Heart left ventricle (tissue), 16 donors: ENCODE measurements at regions of chr5 and their contacts with region 1.

Region 1: GRCh38 chr5:158695595-158696330 is 404.0 kb downstream of the EBF1 start:
- DNase-seq: peak; percentile 67 to 83 (median 72)
- ATAC-seq: peak; percentile 57 to 91 (median 82)
- H3K4me3 ChIP-seq: no peak overlapping the region
- H3K27ac ChIP-seq: peak overlapping the region in 8 of 12 donors; percentile 14 to 58 (median 40)
- H3K4me1 ChIP-seq: peaks cover 0 to 66% (median 6%) of the 10 kb centered on the region in 12 donors
- H3K27me3 ChIP-seq: peaks cover 0 to 9% (median 0%) of the 10 kb centered on the region in 9 donors
- CTCF ChIP-seq: peak; percentile 89 to 99 (median 97)
- POLR2A ChIP-seq: no peak

Region 2: DNA sequence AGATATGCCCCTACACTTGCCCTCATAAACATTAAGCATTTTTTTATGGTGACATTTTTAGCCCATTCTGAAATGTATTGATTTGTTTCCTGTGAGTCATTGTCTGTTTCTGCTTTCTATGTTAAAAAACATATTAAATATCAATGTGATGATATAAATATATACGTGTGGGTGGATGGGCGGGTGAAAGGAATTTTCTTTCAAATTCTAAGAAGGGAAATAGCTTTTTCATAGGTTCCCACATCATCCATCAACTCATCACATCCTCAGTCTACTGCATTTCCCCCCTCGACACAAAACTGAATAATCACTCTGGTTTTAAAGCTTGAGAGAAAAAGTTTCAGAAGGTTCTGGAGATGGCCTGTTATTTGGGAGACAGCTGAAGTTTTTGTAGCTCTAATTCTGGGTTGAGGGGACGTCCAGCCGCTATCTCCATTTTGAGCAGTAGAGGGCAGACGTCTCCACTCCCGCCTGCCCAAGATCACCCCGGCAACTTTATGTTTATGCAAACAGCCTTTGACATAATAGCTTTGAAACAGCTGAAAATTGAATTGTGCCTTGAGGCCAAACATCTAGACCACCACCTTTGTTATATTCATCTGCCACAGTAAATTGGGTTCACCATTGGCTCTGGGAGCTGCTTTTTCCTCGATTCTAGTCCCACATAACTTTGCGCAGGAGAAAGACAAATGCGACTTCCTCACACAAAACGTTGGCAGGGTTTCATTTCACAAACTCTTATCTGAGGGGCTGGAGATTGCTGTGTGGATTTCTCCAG is 620.6 kb before region 1 on chr5:
- intact Hi-C with region 1: loop called in 2 of 10 experiments (anchors 5 to 10 kb)
- DNase-seq: peak; percentile 30 to 61 (median 57)
- ATAC-seq: peak in 3 of 4 donors; percentile 82 to 86 (median 83)
- H3K4me3 ChIP-seq: peak overlapping the region in 11 of 12 donors; percentile 2 to 44 (median 27)
- H3K27ac ChIP-seq: peak overlapping the region in 7 of 12 donors; percentile 28 to 60 (median 48)
- H3K4me1 ChIP-seq: peaks cover 0 to 10% (median 5%) of the 10 kb centered on the region in 12 donors
- H3K27me3 ChIP-seq: no peaks in the 10 kb centered on the region
- CTCF ChIP-seq: peak; percentile 73 to 92 (median 84)
- POLR2A ChIP-seq: no peak

Region 3: DNA sequence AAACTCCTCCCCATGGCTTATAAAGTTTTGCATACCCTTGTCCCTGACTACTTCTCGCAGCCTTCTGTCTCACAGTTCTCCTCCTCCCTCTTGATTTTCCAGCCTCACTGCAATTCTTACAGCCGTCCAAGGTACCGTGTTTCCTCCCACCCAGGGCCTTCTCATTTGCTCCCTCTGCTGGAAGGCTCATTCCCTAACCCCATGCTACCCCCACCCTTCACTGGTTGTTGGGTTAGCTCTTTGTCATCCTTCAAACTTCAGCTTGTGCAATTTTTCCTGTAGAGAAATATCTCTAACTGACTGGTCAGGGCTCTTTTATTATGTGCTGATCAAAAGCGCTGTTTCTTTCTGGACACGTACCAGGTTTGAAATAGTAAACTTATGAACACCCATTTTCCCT is 74.7 kb after region 1 on chr5:
- intact Hi-C with region 1: loop called in 1 of 10 experiments (anchors 5 kb)
- DNase-seq: no peak
- ATAC-seq: peak in 1 of 4 donors; percentile 18
- H3K4me3 ChIP-seq: no peak overlapping the region
- H3K27ac ChIP-seq: peak overlapping the region in 5 of 12 donors; percentile 4 to 49 (median 17)
- H3K4me1 ChIP-seq: peaks cover 0 to 57% (median 14%) of the 10 kb centered on the region in 12 donors
- H3K27me3 ChIP-seq: no peaks in the 10 kb centered on the region
- CTCF ChIP-seq: peak in 2 of 12 donors; percentile 9 to 13
- POLR2A ChIP-seq: no peak

Region 4: DNA sequence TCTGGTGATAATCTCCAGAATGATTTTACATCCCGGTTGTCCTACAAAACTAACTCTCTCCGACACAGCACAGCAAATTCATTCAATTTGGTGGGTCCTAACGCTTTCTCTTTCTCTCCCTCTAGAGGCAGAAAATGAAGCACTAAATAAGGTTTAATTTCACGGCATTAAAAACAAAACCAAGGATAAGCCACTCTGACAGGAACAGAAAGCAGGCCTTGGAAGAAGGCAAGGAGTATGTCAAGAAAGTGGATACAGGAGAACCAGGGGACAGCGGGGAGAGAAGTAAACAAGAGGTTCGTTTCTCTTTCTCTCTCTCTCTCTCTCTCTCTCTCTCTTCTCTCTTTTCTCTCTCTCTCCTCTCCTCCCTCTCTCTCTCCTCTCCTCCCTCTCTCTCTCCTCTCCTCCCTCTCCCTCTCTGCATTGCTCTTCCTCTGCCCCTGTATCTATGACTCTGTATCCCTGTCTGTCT is 354.1 kb after region 1 on chr5:
- intact Hi-C with region 1: loop called in 1 of 10 experiments (anchors 5 kb)
- DNase-seq: no peak
- ATAC-seq: peak; percentile 43 to 70 (median 63)
- H3K4me3 ChIP-seq: peak overlapping the region in 7 of 12 donors; percentile 1 to 55 (median 44)
- H3K27ac ChIP-seq: peak overlapping the region; percentile 73 to 88 (median 84)
- H3K4me1 ChIP-seq: peaks cover 0 to 79% (median 45%) of the 10 kb centered on the region in 12 donors
- H3K27me3 ChIP-seq: peaks cover 0 to 13% (median 0%) of the 10 kb centered on the region in 9 donors
- CTCF ChIP-seq: peak; percentile 24 to 66 (median 44)
- POLR2A ChIP-seq: peak in 1 of 2 donors; percentile 24

Region 5: DNA sequence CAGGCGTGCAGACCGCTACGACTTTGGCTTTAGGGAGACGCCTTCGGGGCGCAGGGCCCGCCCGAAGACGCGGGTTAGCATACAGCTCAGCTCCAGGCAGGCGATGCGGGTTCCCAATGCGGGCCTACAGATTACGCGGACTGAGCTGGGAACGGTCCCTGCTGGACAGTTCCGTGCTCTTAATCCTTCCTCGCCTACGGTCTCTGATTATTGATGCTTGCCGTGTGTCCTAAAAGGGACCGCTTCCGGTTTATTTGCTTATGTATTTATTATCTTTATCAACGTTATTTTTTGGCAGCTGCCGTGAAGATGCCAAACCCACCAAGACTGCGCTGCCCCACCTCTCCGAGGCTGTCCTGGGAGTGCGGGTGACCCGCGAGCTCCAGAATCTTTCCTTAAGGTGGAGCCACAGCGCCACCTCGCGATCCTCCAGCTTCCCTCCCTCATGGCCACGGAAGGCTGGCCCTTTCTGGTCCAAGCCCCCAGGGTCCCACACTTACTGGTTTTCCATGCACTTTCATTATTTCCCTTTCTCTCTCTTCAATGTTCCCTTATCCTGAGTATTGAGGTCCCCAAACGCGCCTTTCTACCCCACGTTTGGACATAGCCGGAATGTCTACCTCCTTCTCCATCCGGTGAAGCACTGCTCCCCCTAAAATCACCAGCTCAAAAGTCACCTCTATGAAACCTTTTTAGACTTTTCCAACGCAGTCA is 411.0 kb after region 1 on chr5:
- intact Hi-C with region 1: loop called (anchors 1 to 2 kb)
- DNase-seq: peak; percentile 73 to 85 (median 81)
- ATAC-seq: peak; percentile 79 to 92 (median 92)
- H3K4me3 ChIP-seq: peak overlapping the region; percentile 11 to 56 (median 44)
- H3K27ac ChIP-seq: peak overlapping the region in 3 of 12 donors; percentile 8 to 51 (median 36)
- H3K4me1 ChIP-seq: peaks cover 0 to 42% (median 13%) of the 10 kb centered on the region in 12 donors
- H3K27me3 ChIP-seq: peaks cover 0 to 65% (median 19%) of the 10 kb centered on the region in 9 donors
- CTCF ChIP-seq: peak; percentile 83 to 98 (median 95)
- POLR2A ChIP-seq: no peak